Dendritic cell treated with granulocyte-macrophage colony-stimulating factor and Interleukin-4, amounts not matched to agents 40 ng/mL and 50 ng/mL, for 4 days (primary cell): ENCODE measurements at regions of chr4 and their contacts with region 1.

Region 1: DNA sequence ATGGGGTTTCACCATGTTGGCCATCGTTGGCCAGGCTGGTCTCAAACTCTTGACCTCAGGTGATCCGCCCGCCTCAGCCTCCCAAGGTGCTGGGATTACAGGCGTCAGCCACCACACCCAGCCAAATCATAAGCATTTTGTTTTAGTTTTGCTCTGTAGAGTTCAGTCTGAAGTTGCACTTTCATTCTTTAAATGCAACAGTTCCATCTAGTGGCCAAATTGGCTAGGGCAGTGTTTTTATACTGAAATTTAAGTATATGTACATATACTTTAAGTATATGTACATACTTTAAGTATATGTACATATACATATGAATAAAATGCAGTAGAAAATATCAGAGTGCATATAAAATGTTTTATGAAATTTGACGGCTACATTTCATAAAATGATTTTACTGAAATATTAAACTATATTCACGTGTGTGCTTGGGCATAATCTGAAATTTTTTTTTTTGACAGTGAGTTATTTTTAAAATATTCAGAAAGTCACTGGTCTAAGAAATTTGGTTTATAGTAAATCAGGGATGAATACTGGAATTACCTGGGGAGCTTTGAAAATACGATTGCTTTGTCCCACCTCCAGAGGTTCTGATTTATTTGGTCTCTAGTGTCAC is 145.5 kb downstream of the NWD2 start:
- H3K4me3 Mint-ChIP-seq: peak overlapping the region; percentile 23
- H3K27ac Mint-ChIP-seq: no peak overlapping the region
- H3K4me1 Mint-ChIP-seq: peaks cover 39% of the 10 kb centered on the region
- H3K27me3 Mint-ChIP-seq: no peaks in the 10 kb centered on the region

Region 2: GRCh38 chr4:36292556-36293188 is 1097.4 kb before region 1 on chr4:
- intact Hi-C with region 1: loop called (anchors 5 kb)
- H3K4me3 Mint-ChIP-seq: no peak overlapping the region
- H3K27ac Mint-ChIP-seq: peak overlapping the region; percentile 18
- H3K4me1 Mint-ChIP-seq: peaks cover 18% of the 10 kb centered on the region
- H3K27me3 Mint-ChIP-seq: no peaks in the 10 kb centered on the region

Region 3: GRCh38 chr4:36399762-36400353 is 990.2 kb before region 1 on chr4:
- intact Hi-C with region 1: loop called (anchors 5 kb)
- H3K4me3 Mint-ChIP-seq: no peak overlapping the region
- H3K27ac Mint-ChIP-seq: no peak overlapping the region
- H3K4me1 Mint-ChIP-seq: peaks cover 5% of the 10 kb centered on the region
- H3K27me3 Mint-ChIP-seq: no peaks in the 10 kb centered on the region

Region 4: DNA sequence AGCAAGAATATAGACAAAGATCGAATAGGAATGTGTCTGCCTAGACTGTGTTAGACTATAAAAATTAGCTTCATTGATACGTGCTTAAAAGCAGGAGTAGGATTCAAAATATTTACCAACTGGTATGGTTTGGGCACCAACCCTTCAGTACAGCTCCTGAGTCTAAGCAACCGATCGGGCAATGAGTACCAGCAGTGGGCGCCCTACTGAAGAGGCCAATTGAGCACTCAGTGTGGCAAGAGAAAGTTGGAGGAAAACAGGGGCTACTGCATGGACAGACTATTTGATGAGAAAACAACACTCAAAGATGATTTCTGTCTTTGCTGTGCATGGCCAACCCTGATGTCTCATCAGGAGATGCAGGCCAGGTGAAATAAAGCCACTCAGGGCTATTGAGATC is 321.5 kb before region 1 on chr4:
- intact Hi-C with region 1: loop called (anchors 5 kb)
- H3K4me3 Mint-ChIP-seq: no peak overlapping the region
- H3K27ac Mint-ChIP-seq: no peak overlapping the region
- H3K4me1 Mint-ChIP-seq: no peaks in the 10 kb centered on the region
- H3K27me3 Mint-ChIP-seq: no peaks in the 10 kb centered on the region

Region 5: DNA sequence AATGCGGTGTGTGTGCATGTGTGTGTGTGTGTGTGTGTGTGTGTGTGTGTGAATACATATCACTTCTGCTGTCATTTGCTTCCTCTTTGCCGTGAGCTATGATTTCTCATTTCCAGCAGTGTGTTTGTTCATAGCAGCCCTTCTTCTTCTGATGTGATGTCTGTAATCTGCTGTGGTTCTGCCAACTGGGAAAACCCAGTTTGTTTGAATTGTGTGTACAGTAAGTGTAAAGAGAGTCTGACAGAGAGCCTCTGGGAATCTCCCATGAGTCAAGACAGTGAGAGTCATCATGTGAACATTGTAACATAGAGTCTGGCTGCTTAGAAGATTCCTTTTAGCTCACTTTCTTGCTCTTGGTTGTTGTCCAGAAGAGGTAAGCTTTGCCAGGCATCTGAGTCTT is 153.9 kb before region 1 on chr4:
- intact Hi-C with region 1: no loop called
- H3K4me3 Mint-ChIP-seq: no peak overlapping the region
- H3K27ac Mint-ChIP-seq: no peak overlapping the region
- H3K4me1 Mint-ChIP-seq: no peaks in the 10 kb centered on the region
- H3K27me3 Mint-ChIP-seq: peaks cover 8% of the 10 kb centered on the region